Naive thymus-derived CD8-positive, alpha-beta T cell (primary cell): ENCODE measurements at regions of chr1 and their contacts with region 1.

Region 1: GRCh38 chr1:70205434-70206118 is at the start of gene LRRC40:
- DNase-seq: peak; percentile 90 to 99 (median 96)
- ATAC-seq: peak; percentile 88 to 94
- H3K4me3 Mint-ChIP-seq: peak within 1 kb of the TSS; percentile 94 to 99 (median 97)
- H3K27ac Mint-ChIP-seq: peak within 1 kb of the TSS; percentile 98 to 100 (median 99)
- H3K4me1 Mint-ChIP-seq: peaks cover 29 to 90% (median 65%) of the 10 kb centered on the region in 4 donors
- H3K27me3 Mint-ChIP-seq: no peaks in the 10 kb centered on the region
- polyA plus RNA-seq, gene LRRC40: 4.6 to 7.4 (median 5.0) TPM

Region 2: DNA sequence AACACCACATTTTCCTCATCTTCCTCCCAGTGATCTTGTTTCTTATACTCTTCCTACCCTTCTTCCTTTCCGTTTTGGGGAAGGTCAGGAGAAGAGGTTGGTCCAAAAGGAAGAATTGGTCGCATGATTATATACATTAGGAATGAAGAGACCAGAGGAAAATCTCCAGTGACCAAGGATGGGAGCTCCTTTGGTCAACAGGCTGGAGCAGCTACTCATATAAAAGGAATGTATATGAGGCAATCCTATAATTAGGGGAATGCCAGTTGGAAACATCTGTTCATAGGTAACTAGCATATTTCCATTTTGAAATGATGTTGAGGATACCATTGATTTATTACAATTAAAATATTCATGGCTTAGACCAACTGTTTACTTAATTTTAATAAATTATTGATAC is 114.7 kb before region 1 on chr1:
- POLR2A ChIA-PET with region 1: no interaction called
- DNase-seq: no peak
- ATAC-seq: no peak
- H3K4me3 Mint-ChIP-seq: no peak overlapping the region
- H3K27ac Mint-ChIP-seq: no peak overlapping the region
- H3K4me1 Mint-ChIP-seq: no peaks in the 10 kb centered on the region
- H3K27me3 Mint-ChIP-seq: peaks cover 2 to 16% (median 4%) of the 10 kb centered on the region in 5 donors

Region 3: DNA sequence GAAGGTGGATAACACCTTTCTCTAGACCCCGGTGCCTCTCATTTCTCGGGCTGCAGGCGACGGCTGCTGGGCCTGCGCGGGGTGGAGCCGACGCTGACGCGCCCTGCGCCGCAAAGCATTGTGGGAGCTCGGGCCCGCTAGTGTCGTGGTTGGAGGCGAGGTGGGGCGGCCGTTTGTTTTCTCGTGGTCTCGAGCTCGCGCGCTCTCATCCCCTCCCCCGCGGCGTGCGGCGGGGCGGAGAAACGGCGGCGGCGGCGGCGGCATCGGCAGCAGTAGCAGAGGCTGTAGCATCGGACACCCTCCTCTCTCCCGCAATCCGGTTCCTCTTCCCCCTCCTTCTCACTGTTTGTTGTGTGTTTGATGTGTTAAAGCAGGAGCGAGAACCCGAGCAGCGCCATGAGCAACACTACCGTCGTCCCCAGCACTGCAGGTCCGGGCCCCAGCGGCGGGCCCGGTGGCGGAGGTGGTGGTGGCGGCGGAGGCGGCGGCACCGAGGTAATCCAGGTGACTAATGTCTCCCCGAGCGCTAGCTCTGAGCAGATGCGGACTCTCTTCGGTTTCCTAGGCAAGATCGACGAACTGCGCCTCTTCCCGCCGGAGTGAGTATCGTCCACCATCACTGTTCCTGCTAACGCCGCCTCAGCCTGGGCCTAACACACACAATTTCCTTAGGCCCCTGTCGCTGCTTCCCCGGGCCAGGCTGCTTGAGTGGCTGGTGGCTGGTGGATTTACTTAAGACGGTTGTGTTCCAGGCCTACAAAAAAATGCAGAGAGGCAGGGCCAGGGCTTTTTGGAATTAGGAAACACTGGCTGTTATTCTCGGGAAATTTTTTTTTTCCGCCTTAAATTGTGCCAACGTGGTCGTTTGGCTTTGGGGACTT is 15.9 kb after region 1 on chr1 and contains the start of gene SRSF11:
- POLR2A ChIA-PET with region 1: interaction called, 49 read pairs
- DNase-seq: peak; percentile 93 to 98 (median 96)
- ATAC-seq: peak; percentile 92 to 94
- H3K4me3 Mint-ChIP-seq: peak within 1 kb of the TSS; percentile 78 to 95 (median 92)
- H3K27ac Mint-ChIP-seq: peak within 1 kb of the TSS; percentile 89 to 98 (median 98)
- H3K4me1 Mint-ChIP-seq: peaks cover 11 to 57% (median 39%) of the 10 kb centered on the region in 4 donors
- H3K27me3 Mint-ChIP-seq: no peaks in the 10 kb centered on the region
- polyA plus RNA-seq, gene SRSF11: 75.7 to 94.6 (median 89.1) TPM

Region 4: DNA sequence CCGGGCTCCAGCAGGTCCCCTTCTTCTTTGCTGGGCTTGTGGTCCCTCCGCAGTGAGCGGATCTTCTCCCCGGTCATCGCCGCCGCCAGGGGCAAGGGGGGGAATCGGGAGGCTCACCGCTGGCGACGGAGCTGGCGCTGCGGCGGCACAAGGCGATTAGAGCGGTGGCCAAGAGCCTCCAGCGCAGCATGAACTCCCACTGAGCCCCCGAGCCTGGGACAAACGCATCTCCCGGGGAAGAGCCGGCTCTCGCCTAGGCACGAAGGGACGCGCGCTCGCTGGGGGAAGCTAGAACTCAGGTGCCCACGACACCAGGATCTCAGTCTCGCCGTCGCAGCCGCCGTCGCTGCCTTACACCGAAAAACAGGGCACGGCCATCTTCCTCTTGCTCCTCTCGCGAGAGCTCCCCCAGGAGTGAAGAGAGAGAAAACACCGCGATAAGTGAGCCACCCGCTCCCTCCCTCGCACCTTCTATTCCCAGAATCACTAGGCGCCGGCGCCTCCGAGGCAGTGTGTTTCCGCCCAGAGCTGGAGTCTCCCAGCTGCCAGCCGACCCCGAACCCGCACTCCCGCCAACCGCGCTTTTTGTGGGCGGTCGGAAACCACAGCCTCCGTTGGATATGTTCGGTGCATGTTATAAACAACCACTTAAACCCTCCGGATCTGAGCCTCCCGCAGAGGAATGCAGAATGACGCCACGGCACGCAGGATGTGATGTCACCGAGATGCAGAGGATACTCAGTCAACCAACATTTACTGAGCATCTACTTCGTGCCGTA is 148.9 kb after region 1 on chr1 and contains the start of gene ANKRD13C:
- POLR2A ChIA-PET with region 1: interaction called, 14 read pairs
- DNase-seq: peak; percentile 75 to 98 (median 92)
- ATAC-seq: peak; percentile 86 to 91
- H3K4me3 Mint-ChIP-seq: peak within 1 kb of the TSS; percentile 91 to 99 (median 98)
- H3K27ac Mint-ChIP-seq: peak within 1 kb of the TSS; percentile 94 to 100 (median 99)
- H3K4me1 Mint-ChIP-seq: peaks cover 19 to 53% (median 41%) of the 10 kb centered on the region in 4 donors
- H3K27me3 Mint-ChIP-seq: no peaks in the 10 kb centered on the region
- polyA plus RNA-seq, gene ANKRD13C: 9.2 to 14.9 (median 10.5) TPM

Region 5: GRCh38 chr1:71080739-71081696 is 875.4 kb after region 1 on chr1 and contains the start of gene ZRANB2:
- POLR2A ChIA-PET with region 1: interaction called, 17 read pairs
- DNase-seq: peak; percentile 78 to 98 (median 91)
- ATAC-seq: peak; percentile 96 to 97
- H3K4me3 Mint-ChIP-seq: peak within 1 kb of the TSS; percentile 89 to 99 (median 96)
- H3K27ac Mint-ChIP-seq: peak within 1 kb of the TSS; percentile 97 to 100 (median 99)
- H3K4me1 Mint-ChIP-seq: peaks cover 5 to 40% (median 25%) of the 10 kb centered on the region in 4 donors
- H3K27me3 Mint-ChIP-seq: peaks cover 9 to 27% (median 19%) of the 10 kb centered on the region in 5 donors
- polyA plus RNA-seq, gene ZRANB2: 40.9 to 67.7 (median 63.3) TPM